CD4-positive, alpha-beta T cell (primary cell): ENCODE measurements at regions of chr22 and their contacts with region 1.

Region 1: DNA sequence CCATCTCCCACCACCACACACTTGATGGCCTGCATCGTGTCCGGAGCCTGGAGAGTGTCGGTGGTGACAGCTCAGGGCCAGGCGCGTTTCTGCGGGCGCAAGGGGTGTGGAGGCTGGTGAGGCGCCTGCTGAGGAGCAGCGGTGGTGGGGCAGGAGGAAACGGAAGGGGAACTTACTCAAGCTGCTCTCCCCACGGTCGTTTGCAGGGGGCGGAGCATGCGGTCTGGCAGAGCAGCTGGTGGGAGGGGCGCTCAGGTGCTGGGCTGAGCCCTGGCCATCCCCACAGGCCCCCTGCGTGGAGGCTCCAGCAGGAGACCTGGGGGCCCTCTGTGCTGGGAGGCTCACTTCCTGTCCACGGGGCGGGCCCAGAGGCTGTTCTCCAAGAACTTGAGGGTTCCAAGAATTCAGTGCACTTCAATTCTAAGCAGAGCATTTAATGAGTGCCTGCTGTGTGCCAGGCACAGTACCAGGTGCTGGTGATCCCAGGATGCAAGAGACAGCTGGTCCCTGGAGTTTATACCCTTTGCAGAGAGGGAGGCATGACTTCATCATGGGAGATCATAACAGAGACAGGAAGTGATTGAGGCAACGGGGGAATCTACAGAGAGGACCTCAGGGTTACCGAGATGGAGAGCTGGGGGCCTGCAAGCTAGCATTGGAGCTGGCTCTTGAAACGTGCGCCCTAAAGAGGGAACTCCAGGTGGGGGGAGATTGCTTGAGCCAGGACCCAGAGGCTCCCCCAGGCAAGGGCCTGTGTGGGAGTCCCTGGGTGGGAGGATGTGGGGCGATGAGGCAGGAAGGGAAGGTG is at the start of gene RAC2:
- DNase-seq: peak; percentile 72 to 95 (median 88)
- ATAC-seq: peak; percentile 59
- H3K4me3 ChIP-seq: peak within 1 kb of the TSS; percentile 100
- H3K4me3 Mint-ChIP-seq: peak within 1 kb of the TSS; percentile 95
- H3K27ac ChIP-seq: peak within 1 kb of the TSS; percentile 85 to 96
- H3K27ac Mint-ChIP-seq: peak within 1 kb of the TSS; percentile 97
- H3K4me1 ChIP-seq: peaks cover 58% of the 10 kb centered on the region
- H3K4me1 Mint-ChIP-seq: peaks cover 58% of the 10 kb centered on the region
- H3K27me3 ChIP-seq: no peaks in the 10 kb centered on the region
- H3K27me3 Mint-ChIP-seq: no peaks in the 10 kb centered on the region
- CTCF ChIP-seq: no peak
- total RNA-seq, gene RAC2: 174 to 180 TPM

Region 2: GRCh38 chr22:37148742-37149665 is 95.3 kb before region 1 on chr22:
- CTCF ChIA-PET with region 1: no interaction called
- POLR2A ChIA-PET with region 1: interaction called, 11 read pairs
- intact Hi-C with region 1: no loop called
- DNase-seq: peak in 1 of 14 experiments; percentile 35
- ATAC-seq: no peak
- H3K4me3 ChIP-seq: peak overlapping the region; percentile 78
- H3K4me3 Mint-ChIP-seq: peak overlapping the region; percentile 93
- H3K27ac ChIP-seq: peak overlapping the region; percentile 61 to 82
- H3K27ac Mint-ChIP-seq: peak overlapping the region; percentile 97
- H3K4me1 ChIP-seq: peaks cover 63% of the 10 kb centered on the region
- H3K4me1 Mint-ChIP-seq: peaks cover 76% of the 10 kb centered on the region
- H3K27me3 ChIP-seq: no peaks in the 10 kb centered on the region
- H3K27me3 Mint-ChIP-seq: no peaks in the 10 kb centered on the region
- CTCF ChIP-seq: no peak

Region 3: DNA sequence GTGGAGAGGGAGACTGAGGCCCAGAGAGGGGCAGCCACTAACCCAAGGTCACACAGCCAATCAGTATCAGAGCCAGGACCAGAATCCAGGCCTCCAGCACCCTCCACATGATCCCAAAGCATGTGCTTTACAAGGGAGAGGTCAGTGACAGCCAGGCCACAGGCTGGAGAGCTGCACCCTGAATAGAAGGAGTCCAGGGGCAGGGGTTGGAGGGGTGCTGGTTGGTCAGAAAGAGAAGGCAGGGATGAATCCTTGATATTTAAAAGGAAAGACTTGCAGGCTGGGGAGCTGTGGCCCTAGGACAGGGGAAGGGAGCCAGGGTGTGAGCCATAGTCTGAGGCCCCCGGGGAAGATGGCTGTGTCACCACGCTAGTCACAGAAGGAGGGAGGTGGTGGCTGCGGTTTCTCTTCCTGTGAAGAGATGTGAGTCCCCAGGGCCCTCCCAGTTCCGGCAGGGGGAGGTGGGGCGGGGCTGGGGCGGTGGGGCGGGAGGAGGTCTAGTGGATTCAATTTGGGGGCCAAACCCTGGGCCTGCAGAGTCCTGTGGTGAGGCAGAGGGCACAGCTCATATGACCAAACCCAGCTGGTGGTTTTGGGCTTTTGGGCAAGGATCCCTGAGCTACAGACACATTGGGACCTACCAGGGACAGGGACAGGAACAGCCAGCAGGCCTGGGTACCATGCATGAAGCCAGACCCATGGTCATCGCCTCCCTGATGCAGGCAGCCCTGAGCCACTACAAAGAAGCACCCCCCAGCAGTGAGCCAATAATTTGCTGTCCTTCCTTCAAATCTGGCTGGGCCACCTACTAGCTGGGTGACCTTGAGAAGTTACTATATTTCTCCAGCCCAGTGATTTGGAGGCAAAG is 14.3 kb before region 1 on chr22:
- CTCF ChIA-PET with region 1: interaction called, 27 read pairs
- POLR2A ChIA-PET with region 1: interaction called, 281 read pairs
- intact Hi-C with region 1: loop called (anchors 1 kb)
- DNase-seq: peak; percentile 79 to 96 (median 88)
- ATAC-seq: peak; percentile 78
- H3K4me3 ChIP-seq: peak overlapping the region; percentile 35
- H3K4me3 Mint-ChIP-seq: peak overlapping the region; percentile 83
- H3K27ac ChIP-seq: peak overlapping the region; percentile 96 to 97
- H3K27ac Mint-ChIP-seq: peak overlapping the region; percentile 97
- H3K4me1 ChIP-seq: peaks cover 97% of the 10 kb centered on the region
- H3K4me1 Mint-ChIP-seq: peaks cover 90% of the 10 kb centered on the region
- H3K27me3 ChIP-seq: no peaks in the 10 kb centered on the region
- H3K27me3 Mint-ChIP-seq: no peaks in the 10 kb centered on the region
- CTCF ChIP-seq: no peak

Region 4: DNA sequence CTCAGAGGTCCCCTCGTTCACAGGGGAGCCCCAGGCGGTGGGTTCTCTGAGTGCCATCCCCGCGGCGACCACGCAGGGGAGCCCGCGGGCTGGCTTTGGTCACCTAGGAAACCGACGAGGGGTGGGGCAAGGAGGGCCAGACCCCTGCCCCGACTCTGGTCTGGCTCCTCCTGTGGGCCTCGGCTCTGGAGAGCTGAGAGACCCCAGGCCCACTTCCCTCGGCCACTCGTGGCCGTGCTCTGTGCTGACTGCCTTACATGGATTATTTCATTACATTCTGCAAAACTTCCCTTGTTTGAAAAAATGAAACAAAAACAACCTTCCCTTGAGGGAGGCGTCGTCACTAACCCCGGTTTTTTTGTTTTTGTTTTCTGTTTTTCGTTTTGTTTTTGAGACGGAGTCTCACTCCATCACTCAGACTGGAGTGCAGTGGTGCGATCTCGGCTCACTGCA is 22.8 kb after region 1 on chr22:
- CTCF ChIA-PET with region 1: interaction called, 139 read pairs
- POLR2A ChIA-PET with region 1: interaction called, 57 read pairs
- intact Hi-C with region 1: no loop called
- DNase-seq: peak; percentile 46 to 84 (median 70)
- ATAC-seq: peak; percentile 91
- H3K4me3 ChIP-seq: peak overlapping the region; percentile 71
- H3K4me3 Mint-ChIP-seq: peak overlapping the region; percentile 87
- H3K27ac ChIP-seq: peak overlapping the region; percentile 67 to 86
- H3K27ac Mint-ChIP-seq: peak overlapping the region; percentile 91
- H3K4me1 ChIP-seq: peaks cover 24% of the 10 kb centered on the region
- H3K4me1 Mint-ChIP-seq: peaks cover 40% of the 10 kb centered on the region
- H3K27me3 ChIP-seq: no peaks in the 10 kb centered on the region
- H3K27me3 Mint-ChIP-seq: no peaks in the 10 kb centered on the region
- CTCF ChIP-seq: peak; percentile 99

Region 5: DNA sequence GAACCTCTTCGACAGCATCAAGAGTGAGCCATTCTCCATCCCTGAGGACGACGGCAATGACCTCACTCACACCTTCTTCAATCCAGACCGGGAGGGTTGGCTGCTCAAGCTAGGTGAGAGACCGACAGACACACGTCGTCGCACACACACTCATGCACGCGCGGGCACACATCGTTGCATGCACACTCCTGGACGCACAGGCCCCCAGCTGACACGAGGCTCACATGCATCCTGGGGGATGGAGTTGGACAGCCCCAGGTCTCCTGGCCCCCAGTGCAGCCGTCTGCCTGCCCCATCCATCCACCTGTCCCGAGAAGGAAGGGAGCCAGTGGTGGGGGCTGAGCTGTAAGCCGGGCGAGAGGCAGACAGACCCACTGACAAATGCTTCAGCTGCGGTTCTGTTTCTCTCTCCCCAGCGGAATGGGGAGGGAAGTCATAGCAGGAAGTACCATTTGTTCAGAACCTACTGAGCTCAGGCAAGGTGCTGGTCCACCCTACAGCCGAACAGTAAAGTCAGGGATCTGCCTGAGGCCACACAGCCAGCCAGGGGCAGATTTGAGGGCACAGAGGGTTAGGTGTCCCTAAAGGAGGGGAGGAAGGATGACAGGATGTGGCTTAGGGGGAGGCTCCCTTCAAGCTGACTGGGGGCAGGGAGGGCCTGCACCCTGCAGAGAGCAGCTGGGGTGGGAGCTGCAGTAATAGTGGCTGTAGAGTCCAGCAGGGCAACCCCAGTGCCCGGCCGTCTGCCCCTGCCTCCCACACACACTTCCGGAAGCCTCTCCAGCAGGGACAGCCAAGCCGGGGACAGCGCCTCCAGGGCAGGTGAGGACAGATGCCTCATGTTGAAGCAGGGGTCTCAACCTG is 65.1 kb after region 1 on chr22:
- CTCF ChIA-PET with region 1: no interaction called
- POLR2A ChIA-PET with region 1: interaction called, 12 read pairs
- intact Hi-C with region 1: no loop called
- DNase-seq: peak; percentile 13 to 88 (median 49)
- ATAC-seq: peak; percentile 56
- H3K4me3 ChIP-seq: peak overlapping the region; percentile 30
- H3K4me3 Mint-ChIP-seq: peak overlapping the region; percentile 77
- H3K27ac ChIP-seq: peak overlapping the region; percentile 47 to 81
- H3K27ac Mint-ChIP-seq: peak overlapping the region; percentile 95
- H3K4me1 ChIP-seq: peaks cover 100% of the 10 kb centered on the region
- H3K4me1 Mint-ChIP-seq: peaks cover 86% of the 10 kb centered on the region
- H3K27me3 ChIP-seq: no peaks in the 10 kb centered on the region
- H3K27me3 Mint-ChIP-seq: no peaks in the 10 kb centered on the region
- CTCF ChIP-seq: no peak

Region 6: GRCh38 chr22:37486224-37486845 is 242.0 kb after region 1 on chr22 and contains the start of gene MFNG:
- CTCF ChIA-PET with region 1: no interaction called
- POLR2A ChIA-PET with region 1: interaction called, 26 read pairs
- intact Hi-C with region 1: no loop called
- DNase-seq: peak; percentile 46 to 90 (median 72)
- ATAC-seq: peak; percentile 48
- H3K4me3 ChIP-seq: peak within 1 kb of the TSS; percentile 94
- H3K4me3 Mint-ChIP-seq: peak within 1 kb of the TSS; percentile 93
- H3K27ac ChIP-seq: peak within 1 kb of the TSS; percentile 87 to 88
- H3K27ac Mint-ChIP-seq: peak within 1 kb of the TSS; percentile 98
- H3K4me1 ChIP-seq: peaks cover 85% of the 10 kb centered on the region
- H3K4me1 Mint-ChIP-seq: peaks cover 77% of the 10 kb centered on the region
- H3K27me3 ChIP-seq: no peaks in the 10 kb centered on the region
- H3K27me3 Mint-ChIP-seq: no peaks in the 10 kb centered on the region
- CTCF ChIP-seq: no peak
- total RNA-seq, gene MFNG: 85.1 to 89.9 TPM